ENCODE measurements at regions of chr6 and their contacts with region 1.

Region 1: GRCh38 chr6:157184202-157185020 is 138.9 kb downstream of the TMEM242 start:
- DNase-seq: peak; percentile 68 to 92 (median 86)
- ATAC-seq: peak; percentile 93 to 95 (median 94)
- H3K4me3 ChIP-seq: no peak overlapping the region
- H3K27ac ChIP-seq: peak overlapping the region in 1 of 4 donors; percentile 33
- H3K4me1 ChIP-seq: peaks cover 0 to 16% (median 11%) of the 10 kb centered on the region in 3 donors
- H3K27me3 ChIP-seq: no peaks in the 10 kb centered on the region
- CTCF ChIP-seq: peak; percentile 77 to 94 (median 90)

Region 2: GRCh38 chr6:157034436-157035230 is 149.8 kb before region 1 on chr6:
- intact Hi-C with region 1: loop called in 2 of 3 experiments (anchors 5 to 10 kb)
- DNase-seq: no peak
- ATAC-seq: peak; percentile 62 to 87 (median 80)
- H3K4me3 ChIP-seq: no peak overlapping the region
- H3K27ac ChIP-seq: no peak overlapping the region
- H3K4me1 ChIP-seq: peaks cover 14 to 35% (median 17%) of the 10 kb centered on the region in 3 donors
- H3K27me3 ChIP-seq: no peaks in the 10 kb centered on the region
- CTCF ChIP-seq: peak in 3 of 4 donors; percentile 35 to 38 (median 38)